ENCODE measurements at regions of chr19 and their contacts with region 1.

Region 1: DNA sequence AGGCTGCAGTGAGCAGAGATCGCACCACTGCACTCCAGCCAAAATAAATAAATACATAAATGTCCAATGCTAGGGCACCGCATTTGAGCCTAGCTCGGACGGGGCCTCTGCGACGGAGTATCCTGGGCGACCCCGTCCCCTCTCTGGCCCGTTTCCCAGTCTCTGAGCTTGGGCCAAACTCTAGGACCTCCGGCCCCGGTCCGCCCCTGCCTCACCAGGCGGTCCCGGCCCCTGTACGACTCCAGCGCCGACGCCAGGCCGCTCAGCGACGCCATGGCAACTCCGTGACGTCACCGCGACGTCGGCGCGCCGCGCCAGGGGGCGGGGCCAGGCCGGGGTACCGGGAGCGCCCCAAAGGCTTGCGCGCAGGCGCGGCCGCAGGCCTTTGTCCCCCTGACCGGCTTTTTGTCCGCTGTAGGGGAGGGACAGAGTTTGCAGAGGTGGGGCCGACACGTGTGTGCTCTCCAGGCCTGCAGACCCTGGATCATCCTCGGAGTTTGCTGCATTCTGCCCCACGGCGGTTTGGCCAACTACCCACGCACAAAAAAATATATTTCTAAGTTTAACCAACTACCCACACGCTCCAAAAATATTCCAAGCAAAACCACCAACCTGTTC is at the start of gene PEX11G:
- DNase-seq: peak; percentile 95
- ATAC-seq: peak; percentile 97
- H3K4me3 Mint-ChIP-seq: peak within 1 kb of the TSS; percentile 70
- H3K27ac Mint-ChIP-seq: peak within 1 kb of the TSS; percentile 92
- H3K4me1 Mint-ChIP-seq: peaks cover 12% of the 10 kb centered on the region
- H3K27me3 Mint-ChIP-seq: peaks cover 7% of the 10 kb centered on the region
- CTCF ChIP-seq: no peak
- total RNA-seq, gene PEX11G: 4.3 to 5.9 TPM (median 5.7 TPM) in 3 replicates

Region 2: GRCh38 chr19:7333198-7334118 is 155.4 kb before region 1 on chr19:
- CTCF ChIA-PET with region 1: no interaction called
- POLR2A ChIA-PET with region 1: no interaction called
- DNase-seq: no peak
- ATAC-seq: no peak
- H3K4me3 Mint-ChIP-seq: no peak overlapping the region
- H3K27ac Mint-ChIP-seq: no peak overlapping the region
- H3K4me1 Mint-ChIP-seq: no peaks in the 10 kb centered on the region
- H3K27me3 Mint-ChIP-seq: no peaks in the 10 kb centered on the region; the same call in 1 of the 2 replicates
- CTCF ChIP-seq: no peak

Region 3: DNA sequence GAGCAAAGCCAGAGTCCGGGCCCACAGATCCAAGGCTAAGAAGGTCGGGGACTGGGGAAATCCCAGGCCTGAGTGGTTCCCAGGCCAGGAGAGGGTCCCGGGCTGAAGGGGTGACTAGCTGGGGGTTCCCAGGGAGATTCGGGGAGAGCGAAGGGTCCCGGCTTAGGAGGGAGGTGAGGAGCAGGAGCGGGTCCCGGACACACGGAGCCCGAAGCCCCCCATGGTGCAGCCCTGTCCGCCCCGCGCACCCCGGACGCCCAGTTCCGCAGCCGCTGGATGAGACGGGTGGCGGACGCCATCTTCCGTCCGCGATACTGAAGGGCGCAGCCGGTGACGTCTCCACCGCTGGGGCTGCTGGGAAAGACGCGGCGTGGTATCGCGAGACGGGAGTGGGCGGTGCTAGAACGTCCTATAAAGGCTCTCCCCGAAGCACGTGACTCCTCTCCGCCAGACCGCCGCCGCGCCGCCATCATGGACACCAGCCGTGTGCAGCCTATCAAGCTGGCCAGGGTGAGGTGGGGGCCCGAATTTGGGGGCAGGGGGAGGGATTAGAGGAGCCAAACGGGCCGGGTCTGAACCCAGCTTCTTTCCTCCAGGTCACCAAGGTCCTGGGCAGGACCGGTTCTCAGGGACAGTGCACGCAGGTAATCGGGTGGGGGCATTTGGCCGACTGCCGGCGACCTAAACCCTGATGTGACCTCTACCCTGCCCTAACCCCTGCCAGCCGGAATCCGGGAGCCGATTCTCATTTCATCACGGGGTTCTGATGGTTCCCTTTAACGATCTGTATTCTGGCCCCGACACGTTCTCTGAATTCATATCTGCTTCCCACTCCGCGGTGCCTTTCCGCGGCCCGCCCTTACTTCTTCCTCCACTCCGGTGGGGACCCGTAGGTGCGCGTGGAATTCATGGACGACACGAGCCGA is 832.5 kb after region 1 on chr19 and contains the starts of genes NDUFA7 and RPS28:
- CTCF ChIA-PET with region 1: no interaction called
- POLR2A ChIA-PET with region 1: interaction called, 12 read pairs
- DNase-seq: peak; percentile 98
- ATAC-seq: peak; percentile 65
- H3K4me3 Mint-ChIP-seq: peak within 1 kb of the TSS; percentile 97
- H3K27ac Mint-ChIP-seq: peak within 1 kb of the TSS; percentile 98
- H3K4me1 Mint-ChIP-seq: peaks cover 36% of the 10 kb centered on the region
- H3K27me3 Mint-ChIP-seq: no peaks in the 10 kb centered on the region; the same call in 1 of the 2 replicates
- CTCF ChIP-seq: no peak
- total RNA-seq, gene NDUFA7: 76.4 to 101 TPM (median 91.9 TPM) in 3 replicates
- total RNA-seq, gene RPS28: 2,082 to 2,373 TPM (median 2,292 TPM) in 3 replicates